ENCODE measurements at regions of chr2 and their contacts with region 1.

Region 1: GRCh38 chr2:100610381-100610831 is 47.6 kb downstream of the PDCL3 start:
- DNase-seq: peak; percentile 83 to 96 (median 90)

Region 2: GRCh38 chr2:100562732-100563720 is 47.4 kb before region 1 on chr2 and contains the start of gene PDCL3:
- intact Hi-C with region 1: no loop called
- DNase-seq: peak; percentile 86 to 98 (median 94)

Region 3: GRCh38 chr2:100818606-100819369 is 208.4 kb after region 1 on chr2:
- intact Hi-C with region 1: loop called (anchors 10 kb)
- DNase-seq: peak in 36 of 42 donors; percentile 29 to 78 (median 48)

Region 4: GRCh38 chr2:100984892-100985379 is 374.5 kb after region 1 on chr2:
- intact Hi-C with region 1: loop called (anchors 5 kb)
- DNase-seq: peak; percentile 62 to 91 (median 81)

Region 5: DNA sequence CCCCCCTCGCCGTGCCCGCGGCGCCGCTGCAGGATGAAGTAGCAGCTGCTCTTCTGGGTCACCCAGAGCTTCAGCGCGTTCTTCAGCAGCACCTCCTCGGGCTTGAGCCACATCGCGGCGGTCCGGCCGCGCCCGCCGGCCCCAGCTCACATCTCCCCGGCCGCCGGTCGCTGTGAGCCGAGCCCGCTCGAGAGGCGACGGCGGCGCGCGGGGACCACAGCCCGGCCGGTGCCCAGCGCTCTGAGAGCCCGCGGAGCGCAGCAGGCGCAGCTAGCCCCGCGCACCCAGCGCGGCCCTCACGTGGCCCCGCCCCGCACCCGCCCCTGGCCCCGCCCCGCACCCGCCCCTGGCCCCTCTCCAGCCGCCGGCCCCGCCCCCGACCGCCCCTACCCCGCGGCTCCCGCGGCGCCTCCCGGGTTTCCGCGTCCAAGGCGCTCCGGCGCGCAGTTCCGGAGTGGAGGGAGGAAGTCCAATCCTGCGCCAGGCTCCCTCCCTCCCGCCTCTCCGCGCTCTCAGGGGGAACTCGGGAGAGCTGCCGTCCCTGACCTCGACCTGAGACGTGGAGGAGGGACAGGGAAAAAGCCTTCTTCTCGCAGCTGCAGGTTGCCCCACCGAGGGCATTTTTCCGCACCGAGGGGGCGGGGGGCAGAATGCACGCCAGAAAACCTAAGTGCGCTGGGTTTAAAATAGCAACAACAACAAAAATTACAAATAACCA is 540.9 kb after region 1 on chr2 and contains the start of gene TBC1D8:
- intact Hi-C with region 1: loop called (anchors 10 kb)
- DNase-seq: peak; percentile 32 to 93 (median 85)

Measured in head of caudate nucleus (tissue), 42 donors.